Gastrocnemius medialis (tissue), 4 donors: ENCODE measurements at regions of chr5 and their contacts with region 1.

Region 1: GRCh38 chr5:109688971-109689739 is 572 bp upstream of the MAN2A1 start:
- DNase-seq: peak; percentile 71 to 86
- ATAC-seq: peak; percentile 61 to 72
- H3K4me3 ChIP-seq: peak overlapping the region; percentile 88 to 98 (median 96)
- H3K27ac ChIP-seq: peak overlapping the region; percentile 94 to 99 (median 98)
- H3K4me1 ChIP-seq: peaks cover 23 to 35% of the 10 kb centered on the region in 2 donors
- H3K27me3 ChIP-seq: no peaks in the 10 kb centered on the region
- CTCF ChIP-seq: no peak
- POLR2A ChIP-seq: peak; percentile 94 to 95

Region 2: DNA sequence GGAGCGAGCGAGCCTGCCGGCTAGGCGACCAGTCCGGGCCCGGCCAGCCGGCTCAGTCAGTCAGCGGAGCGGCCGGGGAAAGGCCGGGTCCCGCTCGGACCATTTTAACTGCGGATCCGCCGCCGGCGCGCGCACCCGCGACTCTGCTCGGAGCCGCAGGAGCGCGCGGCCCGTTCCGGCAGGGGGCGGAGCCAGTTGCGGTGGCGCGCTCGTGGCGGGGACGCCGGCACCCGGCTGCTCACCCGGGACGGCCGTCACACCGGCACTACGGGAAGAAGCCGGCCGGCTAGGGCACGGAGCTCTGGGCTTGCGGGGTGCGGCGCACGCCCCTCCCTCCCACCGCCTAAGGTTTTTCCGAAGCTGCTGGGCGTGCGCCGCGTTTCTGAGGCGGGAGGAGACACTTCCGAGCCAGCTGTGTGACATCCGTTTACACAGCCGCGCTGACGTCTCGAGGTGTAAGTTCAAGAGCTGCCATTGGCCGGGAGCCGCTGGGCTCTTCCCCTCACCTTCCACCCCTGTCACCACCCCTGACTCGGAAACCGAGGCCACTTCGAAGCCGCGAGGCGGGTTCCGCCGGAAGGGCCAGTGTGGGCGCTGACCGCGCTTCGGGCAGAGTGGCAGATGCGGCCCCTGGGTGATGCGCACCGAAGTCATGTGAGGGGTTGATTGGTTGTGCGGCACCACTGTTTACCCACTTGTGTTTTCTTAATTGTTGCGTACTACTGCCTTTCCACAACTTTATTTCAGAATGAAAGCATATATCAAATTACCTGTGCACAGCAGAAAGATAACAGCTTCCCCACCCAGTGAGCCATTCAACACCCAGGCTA is 1307.0 kb before region 1 on chr5 and contains the start of gene FBXL17:
- in situ Hi-C with region 1: no loop called
- intact Hi-C with region 1: loop called (anchors 10 kb)
- DNase-seq: peak; percentile 93 to 96
- ATAC-seq: peak; percentile 86 to 92
- H3K4me3 ChIP-seq: peak within 1 kb of the TSS; percentile 77 to 97 (median 94)
- H3K27ac ChIP-seq: peak within 1 kb of the TSS; percentile 96 to 100 (median 99)
- H3K4me1 ChIP-seq: peaks cover 37 to 38% of the 10 kb centered on the region in 2 donors
- H3K27me3 ChIP-seq: no peaks in the 10 kb centered on the region
- CTCF ChIP-seq: peak in 1 of 5 experiments; percentile 41
- POLR2A ChIP-seq: peak; percentile 91
- total RNA-seq, gene FBXL17: 23.3 to 33.4 (median 26.9) TPM

Region 3: DNA sequence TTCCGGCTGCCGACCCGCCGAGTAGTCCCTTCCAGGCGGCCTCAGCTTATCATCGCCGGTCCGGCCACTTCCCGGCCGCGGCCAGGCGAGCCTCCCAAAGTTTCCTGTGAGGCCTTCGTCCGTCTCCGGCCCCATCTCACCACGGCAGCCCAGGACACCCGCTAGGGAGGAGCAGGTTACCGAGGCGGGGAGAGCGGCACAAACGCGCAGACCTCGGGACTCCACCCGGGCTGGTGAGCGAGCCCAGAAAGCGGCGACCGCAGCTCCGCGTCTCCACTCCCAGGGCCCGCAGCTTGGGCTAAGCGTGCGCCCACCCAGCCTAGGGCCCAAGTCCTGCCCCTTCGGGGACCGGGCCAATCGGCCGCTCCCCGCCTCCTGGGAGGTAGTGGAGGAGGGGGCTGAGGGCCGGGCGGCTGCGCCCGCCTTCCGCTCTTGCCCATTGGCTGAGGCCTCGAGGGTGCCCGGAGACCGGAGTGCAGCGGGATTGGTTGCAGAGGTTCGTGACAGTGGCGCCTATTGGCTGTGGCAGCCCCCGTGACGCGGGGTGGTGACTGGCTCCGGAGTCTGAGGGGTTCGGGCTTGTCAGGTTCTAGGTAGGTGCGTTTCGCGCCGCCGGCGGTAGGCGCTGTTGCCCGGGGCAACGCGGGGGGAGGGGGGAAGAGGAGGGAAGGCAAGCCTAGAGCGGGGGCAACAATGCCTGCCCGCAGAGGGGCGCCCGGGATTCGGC is 940.6 kb before region 1 on chr5:
- in situ Hi-C with region 1: loop called in 1 of 4 experiments (anchors 25 kb)
- intact Hi-C with region 1: loop called (anchors 5 kb)
- DNase-seq: peak; percentile 99
- ATAC-seq: peak; percentile 94 to 95
- H3K4me3 ChIP-seq: peak overlapping the region; percentile 88 to 99 (median 96)
- H3K27ac ChIP-seq: peak overlapping the region; percentile 96 to 100 (median 98)
- H3K4me1 ChIP-seq: peaks cover 3 to 15% of the 10 kb centered on the region in 2 donors
- H3K27me3 ChIP-seq: no peaks in the 10 kb centered on the region
- CTCF ChIP-seq: peak in 2 of 5 experiments; percentile 16 to 35
- POLR2A ChIP-seq: peak; percentile 95 to 96

Region 4: GRCh38 chr5:109645707-109646192 is 43.4 kb before region 1 on chr5:
- in situ Hi-C with region 1: no loop called
- intact Hi-C with region 1: no loop called
- DNase-seq: no peak
- ATAC-seq: no peak
- H3K4me3 ChIP-seq: no peak overlapping the region
- H3K27ac ChIP-seq: no peak overlapping the region
- H3K4me1 ChIP-seq: no peaks in the 10 kb centered on the region
- H3K27me3 ChIP-seq: no peaks in the 10 kb centered on the region
- CTCF ChIP-seq: no peak
- POLR2A ChIP-seq: no peak

Region 5: DNA sequence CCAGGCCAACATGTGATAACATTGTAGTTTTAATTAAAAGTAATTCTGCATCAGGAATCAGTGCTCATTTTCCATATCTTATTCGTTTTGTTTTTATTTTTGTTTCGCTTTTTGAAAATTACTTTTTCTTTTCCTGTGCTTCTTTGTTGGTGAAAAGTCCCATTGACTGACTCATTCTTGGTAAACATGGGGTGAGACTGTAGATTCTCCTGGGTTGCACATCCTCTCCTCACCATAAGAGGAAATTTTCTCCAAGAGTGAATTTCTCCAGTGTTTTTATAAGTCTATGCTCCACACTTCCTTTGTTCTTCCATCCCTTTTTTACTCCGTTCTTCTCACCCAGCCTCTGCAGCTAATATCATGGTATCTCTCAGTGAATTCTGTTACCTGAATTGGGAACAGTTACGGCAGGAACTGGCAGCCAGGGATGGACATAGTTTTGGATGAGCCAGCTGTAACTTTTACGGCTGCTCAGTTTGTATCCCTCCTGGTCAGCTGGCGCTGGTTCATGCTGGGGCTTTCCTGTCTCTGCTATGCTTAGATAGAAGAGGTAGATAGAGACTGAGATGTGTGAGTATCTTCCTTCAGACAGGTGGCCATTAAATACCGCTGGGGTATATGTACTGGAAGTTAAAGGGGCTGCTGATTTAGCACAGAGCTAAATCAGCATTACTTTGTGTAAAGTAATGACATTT is 80.6 kb after region 1 on chr5:
- in situ Hi-C with region 1: loop called in 1 of 4 experiments (anchors 10 kb)
- intact Hi-C with region 1: loop called (anchors 2 kb)
- DNase-seq: no peak
- ATAC-seq: no peak
- H3K4me3 ChIP-seq: no peak overlapping the region
- H3K27ac ChIP-seq: no peak overlapping the region
- H3K4me1 ChIP-seq: peaks cover 27 to 46% of the 10 kb centered on the region in 2 donors
- H3K27me3 ChIP-seq: no peaks in the 10 kb centered on the region
- CTCF ChIP-seq: no peak
- POLR2A ChIP-seq: no peak

Region 6: DNA sequence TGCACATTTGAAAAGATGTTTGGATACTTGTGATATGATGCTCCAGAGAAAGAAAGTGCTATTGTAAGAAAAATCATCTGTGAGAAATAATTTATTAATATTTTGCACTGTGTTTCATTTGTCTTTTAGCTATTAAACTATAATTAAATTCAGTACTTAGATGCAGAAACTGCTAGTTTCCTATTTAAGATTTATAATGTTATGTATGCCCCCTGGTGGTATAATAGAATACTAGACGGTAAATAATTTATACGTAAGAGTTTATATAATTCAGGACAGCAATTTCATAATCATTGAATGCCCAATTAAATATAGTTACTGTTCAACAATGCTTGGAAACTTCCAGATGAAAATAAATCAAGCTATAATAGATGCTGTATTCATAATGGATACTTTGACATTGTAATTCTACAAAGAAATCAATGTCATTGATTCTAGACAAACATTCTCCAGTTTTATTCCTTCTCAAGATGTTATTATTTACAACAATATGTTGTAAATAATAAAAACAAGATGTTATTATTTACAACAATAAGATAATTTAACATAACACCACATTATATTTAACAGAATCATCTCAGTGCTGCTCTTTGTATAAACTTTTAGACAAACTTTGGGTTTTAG is 936.3 kb after region 1 on chr5:
- in situ Hi-C with region 1: no loop called
- intact Hi-C with region 1: loop called (anchors 5 kb)
- DNase-seq: no peak
- ATAC-seq: no peak
- H3K4me3 ChIP-seq: no peak overlapping the region
- H3K27ac ChIP-seq: no peak overlapping the region
- H3K4me1 ChIP-seq: no peaks in the 10 kb centered on the region
- H3K27me3 ChIP-seq: no peaks in the 10 kb centered on the region
- CTCF ChIP-seq: peak; percentile 14 to 51 (median 23)
- POLR2A ChIP-seq: no peak